ENCODE measurements at regions of chr16 and their contacts with region 1.

Region 1: DNA sequence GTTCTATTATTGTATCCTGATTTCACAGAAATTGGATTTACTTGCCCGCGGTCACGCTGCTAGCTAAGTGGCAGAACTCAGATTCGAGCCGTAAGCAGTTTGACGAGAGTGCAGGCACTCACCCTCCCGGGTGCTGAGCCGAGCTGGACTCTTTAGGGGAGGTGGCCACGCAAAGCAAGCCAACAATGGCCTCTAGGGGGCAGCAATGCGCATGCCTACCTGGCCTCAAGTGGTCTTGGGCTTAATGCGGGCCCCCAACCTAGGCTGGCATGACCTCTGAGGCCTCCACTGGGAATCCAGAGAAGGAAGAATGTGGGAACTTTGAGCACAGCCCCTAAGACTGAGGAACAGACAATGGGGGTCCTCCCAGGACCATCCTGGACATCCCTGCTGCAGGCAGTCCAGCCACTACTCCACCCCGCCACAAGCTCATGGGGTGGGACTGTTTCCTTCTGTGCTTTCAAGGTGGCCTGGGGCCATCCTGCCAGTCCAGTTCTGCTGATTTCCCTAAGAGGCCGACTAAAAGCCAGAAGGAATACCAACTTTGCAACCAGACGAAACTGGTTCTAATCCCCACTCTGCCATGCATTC is 276.5 kb downstream of the XYLT1 start:
- DNase-seq: peak; percentile 21 to 68 (median 46)
- ATAC-seq: peak; percentile 49 to 62 (median 50)
- H3K4me3 ChIP-seq: no peak overlapping the region
- H3K27ac ChIP-seq: no peak overlapping the region
- H3K4me1 ChIP-seq: no peaks in the 10 kb centered on the region
- H3K27me3 ChIP-seq: no peaks in the 10 kb centered on the region
- CTCF ChIP-seq: peak; percentile 37 to 74 (median 62)
- POLR2A ChIP-seq: no peak

Region 2: GRCh38 chr16:16956376-16956775 is 237.9 kb before region 1 on chr16:
- intact Hi-C with region 1: no loop called
- DNase-seq: no peak
- ATAC-seq: no peak
- H3K4me3 ChIP-seq: no peak overlapping the region
- H3K27ac ChIP-seq: no peak overlapping the region
- H3K4me1 ChIP-seq: no peaks in the 10 kb centered on the region
- H3K27me3 ChIP-seq: peaks cover 0 to 8% (median 0%) of the 10 kb centered on the region in 9 donors
- CTCF ChIP-seq: no peak
- POLR2A ChIP-seq: no peak

Region 3: DNA sequence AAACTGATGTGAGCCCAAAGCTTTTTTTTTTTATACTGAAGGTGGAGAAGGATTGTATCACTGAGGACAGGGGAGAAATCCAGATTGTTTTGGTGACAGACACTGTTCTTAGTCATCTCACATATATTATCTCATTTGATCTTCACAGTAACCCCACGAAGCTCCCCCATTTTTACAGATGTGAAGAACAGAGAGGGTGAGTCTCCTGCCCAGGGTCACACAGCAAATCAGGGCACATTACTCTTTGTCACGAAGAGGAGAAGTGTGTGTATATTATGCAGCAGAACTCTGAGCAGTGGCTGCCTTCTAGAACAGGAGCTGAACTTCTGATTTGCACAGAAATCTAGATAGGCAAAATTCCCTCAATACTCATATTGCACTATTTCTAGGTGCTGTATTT is 227.8 kb before region 1 on chr16:
- intact Hi-C with region 1: no loop called
- DNase-seq: no peak
- ATAC-seq: no peak
- H3K4me3 ChIP-seq: no peak overlapping the region
- H3K27ac ChIP-seq: no peak overlapping the region
- H3K4me1 ChIP-seq: no peaks in the 10 kb centered on the region
- H3K27me3 ChIP-seq: peaks cover 0 to 12% (median 0%) of the 10 kb centered on the region in 9 donors
- CTCF ChIP-seq: no peak
- POLR2A ChIP-seq: no peak

Region 4: DNA sequence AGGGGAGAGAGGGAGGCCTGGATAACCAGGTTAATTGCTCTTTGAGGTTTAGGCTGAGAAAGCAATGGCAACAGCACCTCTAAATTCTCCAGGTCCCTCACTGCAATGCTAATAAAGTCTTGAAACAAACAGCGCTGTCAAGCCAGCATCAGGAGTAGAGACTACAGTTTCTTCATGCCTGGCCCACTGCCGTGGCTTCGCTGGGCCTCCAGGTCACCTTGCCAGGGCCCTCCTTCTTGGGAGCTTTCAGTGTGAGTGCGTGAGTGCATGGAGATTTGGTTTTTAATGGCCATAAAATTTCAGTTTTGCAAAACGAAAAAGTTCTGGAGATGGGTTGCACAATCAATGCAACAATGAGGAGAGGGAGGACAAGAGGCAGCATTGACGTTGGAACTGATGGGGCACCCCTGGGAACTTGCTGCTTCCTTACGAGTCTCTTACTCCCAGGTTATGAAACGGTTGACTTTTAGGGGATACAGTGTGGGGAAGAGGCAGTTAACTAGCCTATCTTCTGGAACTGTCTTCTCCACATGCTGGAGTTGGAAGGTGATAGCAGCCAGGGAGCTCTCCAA is 47.1 kb after region 1 on chr16:
- intact Hi-C with region 1: loop called in 1 of 10 experiments (anchors 10 kb)
- DNase-seq: no peak
- ATAC-seq: no peak
- H3K4me3 ChIP-seq: no peak overlapping the region
- H3K27ac ChIP-seq: no peak overlapping the region
- H3K4me1 ChIP-seq: peaks cover 0 to 8% (median 0%) of the 10 kb centered on the region in 12 donors
- H3K27me3 ChIP-seq: no peaks in the 10 kb centered on the region
- CTCF ChIP-seq: no peak
- POLR2A ChIP-seq: no peak

Region 5: DNA sequence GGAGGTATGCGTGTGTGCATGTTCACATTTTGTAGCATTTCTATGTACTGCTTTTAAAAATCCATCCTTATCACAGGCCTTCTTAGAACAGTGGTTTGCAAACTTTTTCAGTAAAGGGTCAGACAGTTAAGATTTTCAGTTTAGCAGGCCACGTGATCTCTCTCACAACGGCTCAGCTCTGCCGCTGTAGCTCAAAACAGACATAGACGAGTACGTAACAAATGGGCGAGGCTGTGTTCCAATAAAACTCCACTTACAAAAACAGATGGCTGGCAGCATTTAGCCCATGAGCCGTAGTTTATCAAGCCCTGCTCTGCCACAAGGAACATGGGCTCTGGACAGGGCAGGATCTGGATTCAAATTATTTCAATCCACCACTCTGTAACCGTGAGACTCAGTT is 134.6 kb after region 1 on chr16:
- intact Hi-C with region 1: no loop called
- DNase-seq: peak in 1 of 5 donors; percentile 51
- ATAC-seq: peak; percentile 18 to 56 (median 50)
- H3K4me3 ChIP-seq: no peak overlapping the region
- H3K27ac ChIP-seq: peak overlapping the region in 6 of 12 donors; percentile 11 to 80 (median 46)
- H3K4me1 ChIP-seq: peaks cover 0 to 25% (median 0%) of the 10 kb centered on the region in 12 donors
- H3K27me3 ChIP-seq: no peaks in the 10 kb centered on the region
- CTCF ChIP-seq: no peak
- POLR2A ChIP-seq: no peak

Region 6: DNA sequence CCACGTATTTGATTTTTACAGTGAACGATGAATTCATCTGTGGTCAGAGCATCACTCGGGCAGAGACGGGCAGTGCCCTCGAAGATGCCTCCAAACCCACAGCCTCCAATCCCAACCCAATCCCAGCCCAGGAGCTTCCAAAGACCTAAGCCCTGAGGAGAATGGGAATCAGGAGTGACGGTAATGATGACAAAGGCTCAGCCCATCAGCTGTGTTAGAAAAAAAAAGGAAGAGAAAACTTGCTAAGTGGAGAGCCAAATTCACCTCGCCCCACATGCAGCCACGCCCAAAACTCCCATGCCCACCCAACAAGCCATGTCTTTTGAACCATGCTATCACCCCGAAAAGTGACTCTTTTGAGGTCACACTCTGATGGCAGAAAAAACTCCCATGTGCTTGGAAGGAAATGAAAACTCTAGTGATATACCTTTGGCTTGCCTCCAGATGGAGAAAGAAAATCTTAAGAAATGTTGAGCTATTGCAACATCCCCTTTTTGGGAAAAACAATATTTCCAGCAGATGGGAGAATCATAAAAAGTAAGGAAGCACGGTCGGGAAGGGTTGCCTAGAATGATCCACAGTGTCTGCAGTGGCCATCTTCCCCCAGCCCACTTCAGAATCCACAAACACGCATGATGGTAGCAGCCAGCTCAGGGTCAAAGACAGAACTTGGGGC is 238.8 kb after region 1 on chr16:
- intact Hi-C with region 1: no loop called
- DNase-seq: no peak
- ATAC-seq: peak; percentile 24 to 63 (median 34)
- H3K4me3 ChIP-seq: no peak overlapping the region
- H3K27ac ChIP-seq: peak overlapping the region in 9 of 12 donors; percentile 17 to 75 (median 41)
- H3K4me1 ChIP-seq: peaks cover 0 to 32% (median 0%) of the 10 kb centered on the region in 12 donors
- H3K27me3 ChIP-seq: no peaks in the 10 kb centered on the region
- CTCF ChIP-seq: no peak
- POLR2A ChIP-seq: no peak

Region 7: DNA sequence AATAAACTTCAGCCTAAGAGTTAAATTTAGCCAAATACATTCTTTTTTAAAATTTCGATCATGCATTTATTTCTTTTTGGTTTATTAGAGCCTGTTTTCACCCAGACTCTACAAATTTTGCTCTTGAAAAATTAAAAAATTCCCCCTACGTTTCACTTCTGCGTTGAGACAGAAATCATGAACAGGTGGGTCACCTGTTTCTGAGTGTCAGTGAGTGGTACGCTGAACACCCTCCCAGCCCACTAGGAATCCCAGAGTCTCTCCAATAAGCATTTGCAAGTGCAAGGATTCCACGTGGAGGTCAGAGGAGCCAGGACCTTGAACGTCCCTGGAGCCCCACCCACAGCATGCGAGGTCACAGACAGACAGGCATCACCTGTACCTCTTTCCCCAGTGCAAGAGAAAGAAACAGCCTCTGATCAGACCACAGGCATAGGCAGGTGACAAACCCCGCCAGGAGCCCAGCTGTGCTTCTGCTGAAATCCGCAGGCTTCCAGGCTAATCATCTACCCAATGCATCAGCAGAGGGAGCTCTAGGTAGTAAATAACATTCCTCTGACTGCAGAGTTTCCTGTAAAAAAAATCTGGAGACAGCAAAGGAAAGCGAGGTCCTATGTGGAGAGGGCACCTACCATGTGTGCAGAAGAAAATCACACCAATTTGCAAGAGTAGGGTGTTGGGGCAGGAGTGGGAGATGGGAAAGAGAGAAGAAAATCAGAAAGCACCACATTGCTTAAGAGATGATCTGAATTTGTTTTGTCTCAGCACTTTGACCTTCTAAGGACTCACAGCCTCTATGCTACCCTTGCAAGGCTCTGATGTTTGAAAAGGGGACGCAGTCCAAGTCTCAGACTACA is 282.4 kb after region 1 on chr16:
- intact Hi-C with region 1: loop called in 1 of 10 experiments (anchors 10 kb)
- DNase-seq: peak in 1 of 5 donors; percentile 18
- ATAC-seq: peak; percentile 30 to 76 (median 54)
- H3K4me3 ChIP-seq: no peak overlapping the region
- H3K27ac ChIP-seq: no peak overlapping the region
- H3K4me1 ChIP-seq: peaks cover 0 to 16% (median 0%) of the 10 kb centered on the region in 12 donors
- H3K27me3 ChIP-seq: peaks cover 0 to 31% (median 10%) of the 10 kb centered on the region in 9 donors
- CTCF ChIP-seq: peak in 10 of 12 donors; percentile 29 to 60 (median 47)
- POLR2A ChIP-seq: no peak